Activated CD4-positive, alpha-beta T cell treated with anti-CD3 and anti-CD28 coated beads, Interleukin-2, amount 10 ng/mL, durations not matched to agents 24 days and 14 days (primary cell): ENCODE measurements at regions of chr6 and their contacts with region 1.

Region 1: DNA sequence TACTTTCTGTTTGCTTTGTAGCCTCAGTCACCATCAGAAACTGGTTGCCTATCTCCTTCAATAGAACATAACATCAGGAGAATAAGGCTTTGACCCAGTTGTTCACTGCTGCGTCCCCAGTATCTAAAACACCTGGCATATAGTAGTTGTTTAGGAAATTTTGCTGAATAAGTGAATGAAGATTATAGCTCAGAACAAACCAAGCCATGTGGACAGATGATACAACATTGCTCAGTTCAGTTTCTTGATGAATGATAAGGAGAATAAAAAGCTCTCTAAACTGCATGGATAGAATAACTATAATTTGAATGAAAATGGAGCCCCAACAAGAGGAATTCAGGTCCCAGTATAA is 5.2 kb upstream of the SERPINB1 start:
- DNase-seq: no peak
- H3K4me3 Mint-ChIP-seq: peak overlapping the region; percentile 4
- H3K27ac Mint-ChIP-seq: peak overlapping the region; percentile 6
- H3K4me1 Mint-ChIP-seq: peaks cover 48% of the 10 kb centered on the region
- H3K27me3 Mint-ChIP-seq: no peaks in the 10 kb centered on the region

Region 2: GRCh38 chr6:2799936-2800527 is 46.8 kb before region 1 on chr6:
- intact Hi-C with region 1: no loop called
- DNase-seq: no peak
- H3K4me3 Mint-ChIP-seq: peak overlapping the region; percentile 26
- H3K27ac Mint-ChIP-seq: peak overlapping the region; percentile 88
- H3K4me1 Mint-ChIP-seq: peaks cover 32% of the 10 kb centered on the region
- H3K27me3 Mint-ChIP-seq: no peaks in the 10 kb centered on the region

Region 3: GRCh38 chr6:2900821-2901644 is 54.2 kb after region 1 on chr6:
- intact Hi-C with region 1: loop called (anchors 2 kb)
- DNase-seq: peak; percentile 63
- H3K4me3 Mint-ChIP-seq: peak overlapping the region; percentile 97
- H3K27ac Mint-ChIP-seq: peak overlapping the region; percentile 90
- H3K4me1 Mint-ChIP-seq: peaks cover 51% of the 10 kb centered on the region
- H3K27me3 Mint-ChIP-seq: no peaks in the 10 kb centered on the region

Region 4: GRCh38 chr6:2911171-2911570 is 64.3 kb after region 1 on chr6:
- intact Hi-C with region 1: loop called (anchors 1 kb)
- DNase-seq: peak; percentile 52
- H3K4me3 Mint-ChIP-seq: no peak overlapping the region
- H3K27ac Mint-ChIP-seq: no peak overlapping the region
- H3K4me1 Mint-ChIP-seq: peaks cover 35% of the 10 kb centered on the region
- H3K27me3 Mint-ChIP-seq: peaks cover 1% of the 10 kb centered on the region

Region 5: GRCh38 chr6:2988426-2989331 is 141.8 kb after region 1 on chr6:
- intact Hi-C with region 1: loop called (anchors 1 kb)
- DNase-seq: peak; percentile 93
- H3K4me3 Mint-ChIP-seq: peak overlapping the region; percentile 89
- H3K27ac Mint-ChIP-seq: peak overlapping the region; percentile 99
- H3K4me1 Mint-ChIP-seq: peaks cover 22% of the 10 kb centered on the region
- H3K27me3 Mint-ChIP-seq: peaks cover 3% of the 10 kb centered on the region

Region 6: DNA sequence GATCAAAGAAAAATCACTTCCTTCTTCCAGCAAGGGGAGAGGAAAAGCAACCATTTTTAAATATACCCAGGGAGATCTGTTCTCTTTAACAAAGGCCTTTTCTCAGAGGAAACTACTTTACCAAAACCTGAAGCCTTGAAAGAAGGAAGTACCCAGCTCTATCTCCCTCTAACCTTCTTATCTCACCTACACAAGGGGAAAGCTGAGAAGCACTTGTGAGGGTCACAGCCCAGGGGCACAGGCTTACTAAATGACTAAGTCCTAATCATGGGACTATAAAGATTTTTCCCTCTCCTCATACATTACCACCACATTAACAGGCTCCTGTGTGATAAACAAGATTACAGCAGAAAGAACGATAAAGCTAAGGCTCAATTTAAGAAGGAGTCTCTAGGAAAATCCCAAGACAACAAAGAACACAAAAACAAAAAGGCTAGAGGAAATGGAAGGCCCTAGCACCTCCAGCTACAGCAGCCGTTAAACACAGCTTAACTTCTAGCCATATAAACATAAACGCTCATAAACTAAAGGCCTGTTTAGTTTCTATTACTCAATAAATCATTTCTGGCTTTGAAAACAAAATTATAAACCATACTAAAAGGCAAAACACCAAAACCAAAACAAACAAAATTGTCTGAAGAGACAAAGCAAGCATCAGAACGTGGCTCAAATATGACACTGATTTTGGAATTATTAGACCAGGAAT is 1573.5 kb after region 1 on chr6:
- intact Hi-C with region 1: no loop called
- DNase-seq: no peak
- H3K4me3 Mint-ChIP-seq: no peak overlapping the region
- H3K27ac Mint-ChIP-seq: no peak overlapping the region
- H3K4me1 Mint-ChIP-seq: no peaks in the 10 kb centered on the region
- H3K27me3 Mint-ChIP-seq: no peaks in the 10 kb centered on the region